ENCODE measurements at regions of chr1 and their contacts with region 1.

Region 1: GRCh38 chr1:214584805-214585766 is 17.9 kb upstream of the CENPF start:
- DNase-seq: no peak
- H3K4me3 Mint-ChIP-seq: no peak overlapping the region
- H3K27ac Mint-ChIP-seq: no peak overlapping the region
- H3K4me1 Mint-ChIP-seq: peaks cover 45% of the 10 kb centered on the region
- H3K27me3 Mint-ChIP-seq: no peaks in the 10 kb centered on the region
- CTCF ChIP-seq: peak; percentile 44

Region 2: DNA sequence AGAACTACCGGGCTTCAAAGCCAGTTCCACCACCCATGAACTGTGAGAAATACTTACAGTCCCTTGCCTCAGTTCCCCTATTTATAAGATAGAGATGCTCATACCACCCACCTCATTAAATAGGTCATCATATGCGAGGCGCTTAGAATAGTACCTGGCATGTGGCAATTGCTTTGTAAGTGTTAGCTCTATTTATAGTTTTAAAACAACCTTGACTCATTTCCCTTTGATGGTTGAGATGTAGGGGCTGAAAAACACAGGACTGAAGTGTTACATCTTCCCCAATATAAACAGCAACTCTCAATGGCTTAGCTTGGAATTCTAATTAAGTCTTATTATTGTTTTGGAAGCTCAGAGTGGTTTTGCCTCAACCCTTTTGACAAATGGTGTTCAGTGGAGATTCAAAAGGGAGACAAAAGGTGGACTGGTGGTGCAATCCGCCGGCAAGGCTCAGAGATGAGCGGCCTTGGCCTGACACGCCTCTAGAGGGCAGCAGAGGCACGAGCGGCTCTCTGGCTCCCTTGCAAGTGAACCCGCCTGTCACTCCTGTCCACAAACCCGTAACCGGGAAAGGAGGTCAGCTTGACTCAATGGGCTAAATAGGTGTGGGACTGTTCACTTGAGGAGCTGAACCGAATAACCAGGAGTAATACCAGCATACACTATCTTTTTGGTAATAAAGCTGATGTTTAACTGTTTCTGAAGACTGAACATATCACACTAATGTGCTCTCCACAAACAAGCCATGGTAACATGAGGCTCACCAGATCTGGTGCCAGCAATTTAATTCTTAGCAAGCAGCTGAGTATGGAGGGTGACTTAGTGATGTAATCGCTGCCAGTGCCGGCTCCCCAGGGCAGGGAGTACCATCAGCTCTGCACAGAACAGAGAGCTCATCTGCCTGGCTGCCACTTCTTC is 323.6 kb before region 1 on chr1:
- CTCF ChIA-PET with region 1: no interaction called
- intact Hi-C with region 1: loop called (anchors 2 kb)
- DNase-seq: peak; percentile 92
- H3K4me3 Mint-ChIP-seq: no peak overlapping the region
- H3K27ac Mint-ChIP-seq: no peak overlapping the region
- H3K4me1 Mint-ChIP-seq: peaks cover 13% of the 10 kb centered on the region
- H3K27me3 Mint-ChIP-seq: no peaks in the 10 kb centered on the region
- CTCF ChIP-seq: peak; percentile 90

Region 3: DNA sequence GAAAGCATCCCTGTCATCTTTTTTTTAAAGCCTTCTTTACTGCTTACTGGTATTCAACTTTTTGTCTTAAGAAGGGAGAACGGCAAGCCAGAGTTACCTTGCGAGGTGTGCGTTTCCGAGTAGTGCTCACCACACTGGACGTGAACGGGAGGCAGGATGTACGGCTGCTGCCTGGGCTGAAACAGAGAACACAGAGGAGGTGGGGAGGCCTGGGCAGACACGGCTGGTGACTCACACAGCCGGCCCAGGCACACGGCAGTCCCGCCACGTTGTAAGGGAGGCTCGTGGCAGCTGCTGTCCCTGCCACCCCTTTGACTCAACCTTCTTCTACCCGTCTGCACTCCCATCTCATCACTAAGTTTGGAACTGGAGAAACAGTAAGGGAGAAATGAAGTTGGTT is 198.3 kb before region 1 on chr1:
- CTCF ChIA-PET with region 1: interaction called, 20 read pairs
- intact Hi-C with region 1: loop called (anchors 1 kb)
- DNase-seq: no peak
- H3K4me3 Mint-ChIP-seq: no peak overlapping the region
- H3K27ac Mint-ChIP-seq: no peak overlapping the region
- H3K4me1 Mint-ChIP-seq: no peaks in the 10 kb centered on the region
- H3K27me3 Mint-ChIP-seq: no peaks in the 10 kb centered on the region
- CTCF ChIP-seq: no peak

Region 4: GRCh38 chr1:214476958-214477870 is 107.9 kb before region 1 on chr1:
- CTCF ChIA-PET with region 1: interaction called, 11 read pairs
- intact Hi-C with region 1: loop called (anchors 1 kb)
- DNase-seq: peak; percentile 30
- H3K4me3 Mint-ChIP-seq: peak overlapping the region; percentile 47
- H3K27ac Mint-ChIP-seq: peak overlapping the region; percentile 74
- H3K4me1 Mint-ChIP-seq: peaks cover 60% of the 10 kb centered on the region
- H3K27me3 Mint-ChIP-seq: no peaks in the 10 kb centered on the region
- CTCF ChIP-seq: no peak

Region 5: GRCh38 chr1:214525535-214526019 is 59.5 kb before region 1 on chr1:
- CTCF ChIA-PET with region 1: interaction called, 15 read pairs
- intact Hi-C with region 1: no loop called
- DNase-seq: no peak
- H3K4me3 Mint-ChIP-seq: no peak overlapping the region
- H3K27ac Mint-ChIP-seq: no peak overlapping the region
- H3K4me1 Mint-ChIP-seq: peaks cover 63% of the 10 kb centered on the region
- H3K27me3 Mint-ChIP-seq: no peaks in the 10 kb centered on the region
- CTCF ChIP-seq: no peak

Region 6: DNA sequence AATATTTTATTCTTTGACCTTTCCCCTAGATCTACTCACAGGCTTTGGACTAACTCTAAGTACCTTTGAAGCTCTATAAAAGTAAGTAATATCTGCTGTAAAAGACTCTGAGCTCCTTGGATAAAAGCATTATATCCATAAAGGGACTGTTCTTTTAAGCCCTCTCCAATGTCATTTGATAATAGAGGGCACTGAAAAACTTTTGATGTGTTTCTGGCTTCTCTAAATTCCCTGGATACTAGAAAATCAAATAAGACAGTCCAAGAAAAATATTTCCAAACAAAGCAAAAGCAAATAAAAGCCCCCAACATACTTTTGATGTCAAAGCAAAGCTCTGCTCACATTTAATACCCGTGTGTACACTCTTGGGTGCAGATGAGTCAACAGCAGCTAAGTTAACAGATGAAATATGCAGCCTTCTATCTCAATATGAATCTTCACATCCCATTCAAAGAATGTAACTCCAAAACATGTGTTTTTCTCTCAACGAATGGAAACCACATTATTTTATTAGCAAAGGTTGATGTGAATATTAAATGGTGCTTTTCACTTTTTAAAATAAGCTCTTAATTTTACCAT is 248.2 kb after region 1 on chr1:
- CTCF ChIA-PET with region 1: no interaction called
- intact Hi-C with region 1: no loop called
- DNase-seq: no peak
- H3K4me3 Mint-ChIP-seq: no peak overlapping the region
- H3K27ac Mint-ChIP-seq: no peak overlapping the region
- H3K4me1 Mint-ChIP-seq: peaks cover 8% of the 10 kb centered on the region
- H3K27me3 Mint-ChIP-seq: no peaks in the 10 kb centered on the region
- CTCF ChIP-seq: no peak